GM12878 (cell line): ENCODE measurements at regions of chr20 and their contacts with region 1.

Region 1: GRCh38 chr20:25269594-25270091 is 21.8 kb downstream of the PYGB start:
- DNase-seq: no peak
- ATAC-seq: no peak
- H3K4me3 ChIP-seq: no peak overlapping the region
- H3K27ac ChIP-seq: no peak overlapping the region
- H3K4me1 ChIP-seq: no peaks in the 10 kb centered on the region
- H3K27me3 ChIP-seq: no peaks in the 10 kb centered on the region
- CTCF ChIP-seq: no peak
- EP300 ChIP-seq: no peak
- POLR2A ChIP-seq: no peak
- RAD21 ChIP-seq: no peak

Region 2: GRCh38 chr20:25204550-25205276 is 64.9 kb before region 1 on chr20:
- CTCF ChIA-PET with region 1: no interaction called
- POLR2A ChIA-PET with region 1: no interaction called
- RAD21 ChIA-PET with region 1: no interaction called
- SMC1A ChIA-PET with region 1: no interaction called
- in situ Hi-C with region 1: no loop called
- intact Hi-C with region 1: loop called (anchors 10 kb)
- DNase-seq: no peak
- ATAC-seq: peak; percentile 31
- H3K4me3 ChIP-seq: no peak overlapping the region
- H3K27ac ChIP-seq: no peak overlapping the region
- H3K4me1 ChIP-seq: peaks cover 5% of the 10 kb centered on the region; the same call in 1 of the 2 replicates
- H3K27me3 ChIP-seq: no peaks in the 10 kb centered on the region
- CTCF ChIP-seq: no peak
- EP300 ChIP-seq: no peak
- POLR2A ChIP-seq: no peak
- RAD21 ChIP-seq: no peak